ENCODE measurements at regions of chr13 and their contacts with region 1.

Region 1: DNA sequence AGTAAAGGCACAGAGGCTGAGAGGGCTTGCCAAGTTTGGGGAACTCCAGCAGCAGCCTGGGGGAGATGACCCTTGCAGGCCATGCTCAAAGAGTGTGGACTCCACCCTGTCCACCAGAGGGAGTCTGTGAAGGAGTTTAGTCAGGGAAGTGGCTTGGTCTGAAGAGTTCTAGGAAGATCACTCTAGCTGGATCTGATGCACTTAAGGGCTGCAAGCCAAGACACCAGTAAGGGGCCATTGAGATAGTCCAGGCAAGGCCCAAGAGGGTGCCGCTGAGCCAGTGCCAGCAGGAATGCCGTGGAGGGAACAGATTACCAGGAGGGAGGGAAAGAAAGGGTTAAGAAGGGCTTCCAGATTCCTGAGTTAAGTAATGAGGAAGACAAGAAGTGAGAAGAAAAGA is 68.7 kb downstream of the ZAR1L start:
- DNase-seq: peak; percentile 56 to 80
- H3K4me3 ChIP-seq: no peak overlapping the region
- H3K27ac ChIP-seq: no peak overlapping the region
- H3K4me1 ChIP-seq: no peaks in the 10 kb centered on the region; a peak in 1 of 7 replicates
- H3K27me3 ChIP-seq: no peaks in the 10 kb centered on the region
- CTCF ChIP-seq: peak; percentile 80 to 88 (median 81)
- EP300 ChIP-seq: no peak
- POLR2A ChIP-seq: no peak
- RAD21 ChIP-seq: peak; percentile 65 to 74

Region 2: DNA sequence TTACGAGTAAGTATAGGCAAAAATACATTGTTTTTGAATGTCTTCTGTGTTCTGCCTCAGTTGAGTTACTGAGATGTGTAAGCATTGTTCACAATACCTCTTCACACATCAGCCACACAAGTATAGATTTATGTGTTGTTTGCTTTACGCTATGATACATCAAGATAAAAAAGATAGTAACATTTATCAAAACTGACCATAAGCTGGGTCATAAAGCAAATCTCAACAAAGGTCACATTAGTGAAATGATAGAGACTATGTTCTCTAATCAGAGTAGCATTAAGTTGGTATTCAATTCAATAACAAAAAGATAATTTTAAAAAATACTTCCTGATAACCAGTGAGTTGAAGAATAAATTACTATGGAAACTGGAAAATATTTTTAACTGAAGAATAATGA is 58.8 kb before region 1 on chr13:
- CTCF ChIA-PET with region 1: no interaction called
- POLR2A ChIA-PET with region 1: no interaction called
- DNase-seq: no peak
- H3K4me3 ChIP-seq: no peak overlapping the region
- H3K27ac ChIP-seq: no peak overlapping the region
- H3K4me1 ChIP-seq: 0 out of 7 replicates have a peak, but pooled peaks cover 0 to 2% (median 0%) of the 10 kb centered on the region in 4 experiments
- H3K27me3 ChIP-seq: no peaks in the 10 kb centered on the region
- CTCF ChIP-seq: no peak
- EP300 ChIP-seq: no peak
- POLR2A ChIP-seq: no peak
- RAD21 ChIP-seq: no peak

Region 3: DNA sequence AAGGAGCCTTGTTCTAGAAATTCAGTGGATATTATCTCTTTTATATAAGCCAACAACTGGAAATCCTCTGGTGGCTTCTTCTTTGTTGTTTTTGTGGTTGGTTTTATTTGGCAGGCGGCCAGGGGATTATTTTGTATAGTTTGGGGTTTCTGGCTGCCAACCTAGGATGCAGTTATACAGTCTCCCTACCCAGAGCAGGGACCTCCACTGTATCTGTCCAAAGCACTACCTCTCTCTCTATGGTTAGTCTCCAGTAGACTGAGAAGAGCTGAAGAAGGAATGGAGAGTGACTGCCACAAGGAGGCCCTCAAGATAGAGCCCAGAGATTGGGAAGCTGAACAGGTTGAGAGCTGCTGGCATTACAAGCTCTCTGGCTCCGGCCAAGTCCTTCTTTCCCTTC is 11.5 kb before region 1 on chr13:
- CTCF ChIA-PET with region 1: interaction called, 31 read pairs
- POLR2A ChIA-PET with region 1: no interaction called
- DNase-seq: no peak
- H3K4me3 ChIP-seq: no peak overlapping the region
- H3K27ac ChIP-seq: no peak overlapping the region
- H3K4me1 ChIP-seq: no peaks in the 10 kb centered on the region
- H3K27me3 ChIP-seq: no peaks in the 10 kb centered on the region
- CTCF ChIP-seq: no peak
- EP300 ChIP-seq: no peak
- POLR2A ChIP-seq: no peak
- RAD21 ChIP-seq: no peak

Region 4: GRCh38 chr13:32261567-32261966 is 15.1 kb after region 1 on chr13:
- CTCF ChIA-PET with region 1: interaction called, 19 read pairs
- POLR2A ChIA-PET with region 1: no interaction called
- DNase-seq: no peak
- H3K4me3 ChIP-seq: no peak overlapping the region
- H3K27ac ChIP-seq: no peak overlapping the region
- H3K4me1 ChIP-seq: no peaks in the 10 kb centered on the region
- H3K27me3 ChIP-seq: no peaks in the 10 kb centered on the region
- CTCF ChIP-seq: no peak
- EP300 ChIP-seq: no peak
- POLR2A ChIP-seq: no peak
- RAD21 ChIP-seq: no peak

Region 5: DNA sequence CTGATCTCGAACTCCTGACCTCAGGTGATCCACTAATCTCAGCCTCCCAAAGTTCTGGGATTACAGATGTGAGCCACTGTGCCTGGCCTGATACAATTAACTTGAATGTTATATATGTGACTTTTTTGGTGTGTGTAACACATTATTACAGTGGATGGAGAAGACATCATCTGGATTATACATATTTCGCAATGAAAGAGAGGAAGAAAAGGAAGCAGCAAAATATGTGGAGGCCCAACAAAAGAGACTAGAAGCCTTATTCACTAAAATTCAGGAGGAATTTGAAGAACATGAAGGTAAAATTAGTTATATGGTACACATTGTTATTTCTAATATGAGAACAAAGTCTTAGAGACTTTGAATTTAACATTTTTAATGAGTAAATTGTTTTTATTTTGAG is 124.3 kb after region 1 on chr13:
- CTCF ChIA-PET with region 1: no interaction called
- POLR2A ChIA-PET with region 1: no interaction called
- DNase-seq: no peak
- H3K4me3 ChIP-seq: no peak overlapping the region
- H3K27ac ChIP-seq: no peak overlapping the region
- H3K4me1 ChIP-seq: no peaks in the 10 kb centered on the region
- H3K27me3 ChIP-seq: no peaks in the 10 kb centered on the region
- CTCF ChIP-seq: no peak
- EP300 ChIP-seq: no peak
- POLR2A ChIP-seq: no peak
- RAD21 ChIP-seq: no peak

Region 6: GRCh38 chr13:32472194-32472621 is 225.7 kb after region 1 on chr13:
- CTCF ChIA-PET with region 1: no interaction called
- POLR2A ChIA-PET with region 1: no interaction called
- DNase-seq: no peak
- H3K4me3 ChIP-seq: no peak overlapping the region
- H3K27ac ChIP-seq: no peak overlapping the region
- H3K4me1 ChIP-seq: no peaks in the 10 kb centered on the region
- H3K27me3 ChIP-seq: no peaks in the 10 kb centered on the region
- CTCF ChIP-seq: no peak
- EP300 ChIP-seq: no peak
- POLR2A ChIP-seq: no peak
- RAD21 ChIP-seq: no peak

Measured in H1 (cell line).